A673 (cell line): ENCODE measurements at regions of chr22 and their contacts with region 1.

Region 1: DNA sequence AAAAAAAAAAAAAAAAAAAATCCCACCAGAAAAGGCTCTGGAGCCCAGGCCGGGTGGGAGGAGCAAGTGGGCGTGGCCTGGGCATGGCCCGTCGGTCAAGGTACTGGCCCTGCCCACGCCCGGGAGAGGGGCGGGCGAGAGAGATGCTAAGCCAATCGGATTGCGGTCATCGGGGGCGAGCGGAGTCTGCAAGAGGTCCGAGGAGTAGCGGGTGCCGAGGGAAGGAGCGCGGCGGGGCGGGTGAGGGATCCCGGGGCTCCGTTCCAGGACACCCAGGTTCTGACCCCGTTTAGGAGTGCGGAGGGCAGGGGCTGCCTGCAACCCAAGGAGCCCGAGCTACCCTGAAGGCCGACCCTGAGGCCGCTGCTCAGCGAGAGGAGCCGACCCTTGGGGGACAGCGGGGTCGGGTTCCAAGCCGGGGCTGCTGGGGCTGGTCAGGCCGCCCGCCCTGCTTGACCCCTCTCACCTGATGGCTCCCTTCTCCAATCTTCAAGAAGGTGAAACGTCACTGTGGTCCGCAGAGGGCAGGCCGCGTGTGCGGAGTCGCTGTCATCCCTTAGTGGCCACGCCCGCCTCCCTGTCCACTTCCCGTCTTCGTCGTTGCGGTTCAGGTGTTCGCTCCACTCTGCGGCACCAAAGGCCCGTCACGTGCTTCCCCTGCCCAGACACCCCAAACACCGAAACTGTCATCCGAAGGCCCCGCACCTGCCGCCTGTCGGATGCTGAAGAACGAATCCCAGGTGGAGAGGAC is 11.1 kb upstream of the TAB1 start:
- DNase-seq: peak; percentile 67
- H3K4me3 ChIP-seq: peak overlapping the region; percentile 20
- H3K27ac ChIP-seq: no peak overlapping the region
- H3K4me1 ChIP-seq: no peaks in the 10 kb centered on the region
- H3K27me3 ChIP-seq: no peaks in the 10 kb centered on the region
- CTCF ChIP-seq: no peak

Region 2: GRCh38 chr22:39080052-39080762 is 308.2 kb before region 1 on chr22:
- CTCF ChIA-PET with region 1: no interaction called
- POLR2A ChIA-PET with region 1: no interaction called
- intact Hi-C with region 1: no loop called
- DNase-seq: no peak
- H3K4me3 ChIP-seq: no peak overlapping the region
- H3K27ac ChIP-seq: no peak overlapping the region
- H3K4me1 ChIP-seq: peaks cover 8% of the 10 kb centered on the region
- H3K27me3 ChIP-seq: no peaks in the 10 kb centered on the region
- CTCF ChIP-seq: no peak

Region 3: DNA sequence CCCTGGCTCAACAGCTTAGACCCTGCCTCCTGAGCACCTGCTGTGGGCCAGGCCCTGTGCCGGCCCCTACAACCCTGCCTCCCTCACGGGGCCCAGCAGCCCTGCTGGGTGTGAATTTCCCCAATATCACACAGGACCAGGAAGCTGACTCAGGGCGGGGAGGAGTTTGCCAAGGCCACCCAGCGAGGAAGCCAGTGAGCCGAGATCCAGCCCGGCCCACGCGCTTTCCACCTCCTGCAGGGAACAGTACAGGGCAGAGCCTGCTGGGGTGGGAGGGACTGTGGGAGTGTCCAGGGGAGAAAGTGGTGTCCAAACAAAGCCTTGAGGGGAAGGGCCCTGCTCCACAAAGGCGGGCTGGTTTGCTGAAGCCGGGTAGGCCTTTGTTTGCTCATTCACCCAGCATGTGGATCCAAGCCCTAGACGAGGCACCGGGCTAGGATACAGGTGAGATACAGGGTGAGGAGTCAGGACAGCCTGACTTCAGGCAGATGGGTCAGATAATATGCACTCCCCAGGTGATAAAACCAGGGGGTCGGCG is 95.8 kb before region 1 on chr22:
- CTCF ChIA-PET with region 1: no interaction called
- POLR2A ChIA-PET with region 1: no interaction called
- intact Hi-C with region 1: no loop called
- DNase-seq: peak; percentile 96
- H3K4me3 ChIP-seq: no peak overlapping the region
- H3K27ac ChIP-seq: peak overlapping the region; percentile 69
- H3K4me1 ChIP-seq: peaks cover 16% of the 10 kb centered on the region
- H3K27me3 ChIP-seq: no peaks in the 10 kb centered on the region
- CTCF ChIP-seq: no peak

Region 4: GRCh38 chr22:39502109-39502788 is 113.8 kb after region 1 on chr22 and contains the start of gene MIEF1:
- CTCF ChIA-PET with region 1: interaction called, 13 read pairs
- POLR2A ChIA-PET with region 1: no interaction called
- intact Hi-C with region 1: no loop called
- DNase-seq: peak; percentile 95
- H3K4me3 ChIP-seq: peak within 1 kb of the TSS; percentile 82
- H3K27ac ChIP-seq: peak within 1 kb of the TSS; percentile 69
- H3K4me1 ChIP-seq: peaks cover 27% of the 10 kb centered on the region
- H3K27me3 ChIP-seq: no peaks in the 10 kb centered on the region
- CTCF ChIP-seq: peak; percentile 28; the same call in 1 of the 2 replicates
- total RNA-seq, gene MIEF1: 47.1 and 55.1 TPM in 2 replicates